Heart left ventricle (tissue), 16 donors: ENCODE measurements at regions of chrX and their contacts with region 1.

Region 1: DNA sequence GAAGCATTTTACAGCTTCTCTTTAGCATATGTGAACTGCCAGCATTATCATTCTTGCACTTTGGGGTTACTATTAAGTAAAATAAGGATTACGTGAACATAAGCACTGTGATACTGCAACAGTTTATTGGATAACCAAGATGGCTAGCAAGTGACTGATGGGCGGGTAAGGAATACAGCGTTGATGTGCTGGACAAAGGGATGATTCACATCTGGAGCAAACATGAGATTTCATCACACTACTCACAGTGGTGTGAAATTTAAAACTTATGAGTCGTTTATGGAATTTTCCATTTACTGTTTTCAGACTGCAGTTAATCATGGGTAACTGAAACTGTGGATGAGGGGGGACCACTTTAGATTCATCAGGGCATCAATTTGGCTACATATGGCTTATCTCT is 16.0 kb downstream of the NBDY start:
- DNase-seq: no peak
- ATAC-seq: peak in 2 of 4 donors; percentile 55 to 71
- H3K4me3 ChIP-seq: no peak overlapping the region
- H3K27ac ChIP-seq: no peak overlapping the region
- H3K4me1 ChIP-seq: peaks cover 0 to 11% (median 0%) of the 10 kb centered on the region in 12 donors
- H3K27me3 ChIP-seq: peaks cover 0 to 64% (median 0%) of the 10 kb centered on the region in 9 donors
- CTCF ChIP-seq: no peak
- POLR2A ChIP-seq: no peak

Region 2: GRCh38 chrX:56813318-56813837 is 68.4 kb after region 1 on chrX:
- intact Hi-C with region 1: no loop called
- DNase-seq: no peak
- ATAC-seq: peak in 3 of 4 donors; percentile 66 to 80 (median 73)
- H3K4me3 ChIP-seq: peak overlapping the region in 3 of 12 donors; percentile 37 to 43 (median 42)
- H3K27ac ChIP-seq: peak overlapping the region in 8 of 12 donors; percentile 3 to 82 (median 40)
- H3K4me1 ChIP-seq: peaks cover 0 to 18% (median 2%) of the 10 kb centered on the region in 12 donors
- H3K27me3 ChIP-seq: peaks cover 0 to 18% (median 0%) of the 10 kb centered on the region in 9 donors
- CTCF ChIP-seq: no peak
- POLR2A ChIP-seq: no peak

Region 3: DNA sequence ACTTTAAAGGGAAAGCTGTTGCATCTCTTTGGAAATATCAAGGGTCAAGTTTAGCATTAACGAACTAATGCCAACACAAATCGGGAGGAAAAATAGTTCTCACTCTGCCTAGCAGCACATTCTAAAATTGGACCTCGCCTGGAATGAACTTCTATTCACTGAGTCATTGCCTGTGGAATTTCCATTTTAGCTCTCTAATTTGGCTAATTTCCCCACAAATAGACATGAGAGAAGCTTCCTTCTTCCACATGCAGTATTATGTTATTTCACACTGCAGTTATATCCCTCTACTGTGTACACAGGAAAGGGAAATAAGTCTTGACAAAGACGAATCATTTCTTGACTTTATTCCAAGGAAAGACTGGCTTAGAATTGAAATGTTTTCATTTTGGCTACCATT is 1156.0 kb after region 1 on chrX:
- intact Hi-C with region 1: loop called in 1 of 10 experiments (anchors 10 kb)
- DNase-seq: peak in 1 of 5 donors; percentile 25
- ATAC-seq: peak; percentile 64 to 82 (median 74)
- H3K4me3 ChIP-seq: peak overlapping the region in 8 of 12 donors; percentile 3 to 39 (median 16)
- H3K27ac ChIP-seq: peak overlapping the region; percentile 1 to 82 (median 54)
- H3K4me1 ChIP-seq: peaks cover 0 to 57% (median 8%) of the 10 kb centered on the region in 12 donors
- H3K27me3 ChIP-seq: peaks cover 0 to 3% (median 0%) of the 10 kb centered on the region in 9 donors
- CTCF ChIP-seq: no peak
- POLR2A ChIP-seq: no peak